CD4-positive, alpha-beta memory T cell (primary cell): ENCODE measurements at regions of chr18 and their contacts with region 1.

Region 1: GRCh38 chr18:35029770-35030169 is 11.4 kb upstream of the MAPRE2 start:
- DNase-seq: peak in 4 of 5 donors; percentile 47 to 62 (median 56)
- H3K4me3 ChIP-seq: peak overlapping the region; percentile 25 to 60
- H3K4me3 Mint-ChIP-seq: peak overlapping the region; percentile 81 to 94 (median 88)
- H3K27ac ChIP-seq: peak overlapping the region; percentile 80
- H3K27ac Mint-ChIP-seq: peak overlapping the region; percentile 84 to 99 (median 98)
- H3K4me1 ChIP-seq: peaks cover 36% of the 10 kb centered on the region
- H3K4me1 Mint-ChIP-seq: peaks cover 34 to 45% (median 40%) of the 10 kb centered on the region in 4 donors
- H3K27me3 ChIP-seq: no peaks in the 10 kb centered on the region
- H3K27me3 Mint-ChIP-seq: no peaks in the 10 kb centered on the region

Region 2: DNA sequence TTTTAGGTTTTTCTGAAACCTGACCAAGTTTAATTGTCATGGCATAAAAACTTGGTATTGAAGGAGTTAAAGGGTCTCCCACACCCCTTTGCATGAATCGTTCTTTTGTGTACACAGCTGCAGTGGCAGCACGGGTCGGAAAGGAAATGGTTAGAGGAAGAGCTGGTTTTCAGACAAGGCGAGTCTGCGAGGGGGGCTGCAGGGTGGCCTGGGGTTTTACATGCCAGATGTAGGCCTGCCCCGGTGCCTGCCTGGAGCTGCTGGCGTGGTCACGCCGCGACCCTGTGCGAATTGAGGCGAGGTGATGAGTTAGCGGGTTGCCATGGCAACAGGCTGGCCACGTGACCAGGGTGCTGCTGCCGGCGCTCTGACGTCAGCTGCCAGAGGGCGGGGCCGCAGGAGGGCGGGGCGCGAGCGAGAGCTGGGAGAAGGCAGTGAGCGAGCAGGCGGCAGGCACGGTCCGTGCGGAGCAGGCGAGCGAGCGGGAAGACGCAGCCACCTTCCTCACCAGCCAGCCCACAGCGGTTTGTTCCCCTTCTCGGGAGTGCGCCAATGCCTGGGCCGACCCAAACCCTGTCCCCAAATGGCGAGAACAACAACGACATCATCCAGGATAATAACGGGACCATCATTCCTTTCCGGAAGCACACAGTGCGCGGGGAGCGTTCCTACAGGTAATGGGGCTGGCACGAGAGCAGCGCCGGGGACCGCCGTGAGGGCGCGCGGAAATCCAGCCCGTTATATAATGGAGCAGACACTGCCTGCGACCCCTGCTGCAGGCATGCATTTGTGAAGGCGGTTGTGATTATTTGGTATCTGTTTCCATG is 11.4 kb after region 1 on chr18 and contains the start of gene MAPRE2:
- CTCF ChIA-PET with region 1: interaction called, 105 read pairs
- POLR2A ChIA-PET with region 1: interaction called, 172 read pairs
- intact Hi-C with region 1: loop called (anchors 1 kb)
- DNase-seq: peak; percentile 98 to 99 (median 99)
- H3K4me3 ChIP-seq: peak within 1 kb of the TSS; percentile 73 to 98
- H3K4me3 Mint-ChIP-seq: peak within 1 kb of the TSS; percentile 91 to 99 (median 98)
- H3K27ac ChIP-seq: peak within 1 kb of the TSS; percentile 94
- H3K27ac Mint-ChIP-seq: peak within 1 kb of the TSS; percentile 93 to 100 (median 98)
- H3K4me1 ChIP-seq: peaks cover 43% of the 10 kb centered on the region
- H3K4me1 Mint-ChIP-seq: peaks cover 35 to 60% (median 46%) of the 10 kb centered on the region in 4 donors
- H3K27me3 ChIP-seq: no peaks in the 10 kb centered on the region
- H3K27me3 Mint-ChIP-seq: peaks cover 0 to 2% of the 10 kb centered on the region in 2 donors
- total RNA-seq, gene MAPRE2: 48.8 to 54.1 TPM

Region 3: DNA sequence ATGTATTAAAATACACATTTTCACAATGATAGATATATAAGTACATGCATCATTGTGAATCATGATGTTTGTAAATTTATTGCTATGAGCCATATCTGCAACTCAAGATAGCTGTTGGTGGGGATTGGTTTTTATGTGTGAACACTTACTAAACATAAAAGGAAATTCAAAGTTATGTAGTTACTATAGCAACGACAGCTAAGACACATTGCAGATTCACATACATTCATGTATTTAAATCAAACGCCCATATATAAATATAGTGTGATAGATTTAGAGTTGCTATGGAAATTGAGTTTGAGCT is 77.0 kb after region 1 on chr18:
- CTCF ChIA-PET with region 1: interaction called, 3 read pairs
- POLR2A ChIA-PET with region 1: no interaction called
- intact Hi-C with region 1: loop called (anchors 1 kb)
- DNase-seq: peak in 4 of 5 donors; percentile 14 to 44 (median 25)
- H3K4me3 ChIP-seq: no peak overlapping the region
- H3K4me3 Mint-ChIP-seq: peak overlapping the region in 2 of 8 donors; percentile 2 to 6
- H3K27ac ChIP-seq: no peak overlapping the region
- H3K27ac Mint-ChIP-seq: peak overlapping the region in 6 of 7 donors; percentile 1 to 58 (median 39)
- H3K4me1 ChIP-seq: peaks cover 32% of the 10 kb centered on the region
- H3K4me1 Mint-ChIP-seq: peaks cover 36 to 54% (median 48%) of the 10 kb centered on the region in 4 donors
- H3K27me3 ChIP-seq: no peaks in the 10 kb centered on the region
- H3K27me3 Mint-ChIP-seq: no peaks in the 10 kb centered on the region

Region 4: GRCh38 chr18:35143622-35144596 is 114.1 kb after region 1 on chr18:
- CTCF ChIA-PET with region 1: interaction called, 128 read pairs
- POLR2A ChIA-PET with region 1: interaction called, 6 read pairs
- intact Hi-C with region 1: loop called (anchors 1 kb)
- DNase-seq: peak; percentile 22 to 48 (median 39)
- H3K4me3 ChIP-seq: no peak overlapping the region
- H3K4me3 Mint-ChIP-seq: no peak overlapping the region
- H3K27ac ChIP-seq: no peak overlapping the region
- H3K27ac Mint-ChIP-seq: peak overlapping the region in 2 of 7 donors; percentile 1 to 43
- H3K4me1 ChIP-seq: no peaks in the 10 kb centered on the region
- H3K4me1 Mint-ChIP-seq: peaks cover 0 to 1% (median 0%) of the 10 kb centered on the region in 4 donors
- H3K27me3 ChIP-seq: no peaks in the 10 kb centered on the region
- H3K27me3 Mint-ChIP-seq: no peaks in the 10 kb centered on the region

Region 5: DNA sequence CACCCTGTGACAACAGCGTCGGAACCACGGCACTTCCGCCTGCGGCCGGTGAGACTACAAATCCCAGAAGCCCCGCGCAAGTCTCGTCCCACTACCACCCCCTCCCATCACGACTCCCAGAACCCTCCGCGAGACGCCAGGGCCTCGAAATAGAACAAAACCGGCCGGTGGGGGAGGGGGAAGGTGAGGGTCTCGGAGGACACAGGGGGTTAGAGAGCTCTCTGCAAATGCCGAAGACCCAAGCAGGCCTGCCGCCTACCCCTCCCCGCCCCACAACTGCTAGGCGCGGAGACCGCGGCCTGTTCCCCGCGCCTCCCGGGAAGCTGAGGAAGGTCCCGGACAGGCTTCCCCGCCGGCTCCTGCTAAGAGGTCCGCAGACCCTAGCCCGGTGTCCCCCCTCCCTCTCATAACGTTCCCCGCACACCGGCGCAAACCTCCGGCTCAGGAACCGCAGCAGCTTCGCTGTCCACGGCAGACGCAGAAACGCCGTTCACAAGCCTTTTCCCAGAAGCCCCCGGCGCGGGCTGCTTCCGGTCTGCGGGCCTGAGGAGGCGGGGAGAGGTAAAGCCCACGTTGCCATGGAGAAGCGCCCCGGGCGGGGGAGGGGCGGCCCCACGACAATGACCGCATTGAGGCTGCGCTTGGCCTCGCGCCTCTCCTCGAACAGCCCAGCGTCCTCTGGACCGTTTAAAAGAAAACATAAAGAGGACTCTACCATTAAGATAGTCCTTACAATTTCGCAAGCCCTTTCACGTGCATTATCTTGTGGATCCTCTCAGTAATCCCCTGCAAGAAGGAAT is 314.4 kb after region 1 on chr18 and contains the start of gene ZNF24:
- CTCF ChIA-PET with region 1: interaction called, 6 read pairs
- POLR2A ChIA-PET with region 1: interaction called, 14 read pairs
- intact Hi-C with region 1: loop called (anchors 5 kb)
- DNase-seq: peak; percentile 89 to 95 (median 89)
- H3K4me3 ChIP-seq: peak within 1 kb of the TSS; percentile 87 to 96
- H3K4me3 Mint-ChIP-seq: peak within 1 kb of the TSS; percentile 94 to 99 (median 98)
- H3K27ac ChIP-seq: peak within 1 kb of the TSS; percentile 99
- H3K27ac Mint-ChIP-seq: peak within 1 kb of the TSS; percentile 96 to 99 (median 98)
- H3K4me1 ChIP-seq: peaks cover 45% of the 10 kb centered on the region
- H3K4me1 Mint-ChIP-seq: peaks cover 32 to 58% (median 44%) of the 10 kb centered on the region in 4 donors
- H3K27me3 ChIP-seq: no peaks in the 10 kb centered on the region
- H3K27me3 Mint-ChIP-seq: no peaks in the 10 kb centered on the region
- total RNA-seq, gene ZNF24: 89.1 to 90.5 TPM